ENCODE measurements at regions of chr17 and their contacts with region 1.

Region 1: DNA sequence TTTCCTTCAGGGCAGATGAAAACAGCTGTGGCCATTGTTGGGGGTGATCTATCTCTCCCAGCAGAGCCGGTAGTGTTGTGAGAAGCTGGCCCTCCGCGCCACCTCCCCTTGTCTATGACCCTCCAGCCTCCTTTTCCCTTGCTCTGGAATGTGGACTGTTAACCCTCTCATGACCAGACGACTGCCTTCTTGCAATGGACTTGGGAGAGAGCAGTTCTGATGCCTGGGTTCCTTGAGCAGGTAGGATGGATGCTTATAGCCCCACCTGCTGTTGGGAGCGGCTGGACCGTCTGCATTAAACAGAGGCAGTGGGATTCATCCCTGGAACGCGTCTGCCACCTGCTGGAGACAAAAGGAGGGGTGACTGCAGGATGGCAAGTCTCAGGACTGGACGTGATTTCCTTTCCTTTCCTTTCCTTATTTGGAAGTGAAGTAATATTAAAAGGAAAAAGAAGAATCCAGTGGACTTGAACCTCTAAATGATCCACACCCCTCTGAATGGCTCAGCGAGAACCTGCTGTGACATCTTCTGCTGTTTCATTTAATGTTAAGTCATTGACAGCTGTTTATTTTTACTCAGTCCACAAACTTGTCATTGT is 1.8 kb upstream of the SOST start:
- H3K4me3 Mint-ChIP-seq: no peak overlapping the region
- H3K27ac Mint-ChIP-seq: no peak overlapping the region
- H3K4me1 Mint-ChIP-seq: peaks cover 6% of the 10 kb centered on the region
- H3K27me3 Mint-ChIP-seq: peaks cover 45% of the 10 kb centered on the region

Region 2: GRCh38 chr17:43576563-43577229 is 183.7 kb before region 1 on chr17:
- intact Hi-C with region 1: loop called (anchors 5 kb)
- H3K4me3 Mint-ChIP-seq: no peak overlapping the region
- H3K27ac Mint-ChIP-seq: no peak overlapping the region
- H3K4me1 Mint-ChIP-seq: peaks cover 9% of the 10 kb centered on the region
- H3K27me3 Mint-ChIP-seq: peaks cover 36% of the 10 kb centered on the region

Region 3: GRCh38 chr17:43661699-43662412 is 98.5 kb before region 1 on chr17 and contains the start of gene MEOX1:
- intact Hi-C with region 1: no loop called
- H3K4me3 Mint-ChIP-seq: no peak within 1 kb of the TSS
- H3K27ac Mint-ChIP-seq: no peak within 1 kb of the TSS
- H3K4me1 Mint-ChIP-seq: peaks cover 9% of the 10 kb centered on the region
- H3K27me3 Mint-ChIP-seq: peaks cover 20% of the 10 kb centered on the region

Region 4: DNA sequence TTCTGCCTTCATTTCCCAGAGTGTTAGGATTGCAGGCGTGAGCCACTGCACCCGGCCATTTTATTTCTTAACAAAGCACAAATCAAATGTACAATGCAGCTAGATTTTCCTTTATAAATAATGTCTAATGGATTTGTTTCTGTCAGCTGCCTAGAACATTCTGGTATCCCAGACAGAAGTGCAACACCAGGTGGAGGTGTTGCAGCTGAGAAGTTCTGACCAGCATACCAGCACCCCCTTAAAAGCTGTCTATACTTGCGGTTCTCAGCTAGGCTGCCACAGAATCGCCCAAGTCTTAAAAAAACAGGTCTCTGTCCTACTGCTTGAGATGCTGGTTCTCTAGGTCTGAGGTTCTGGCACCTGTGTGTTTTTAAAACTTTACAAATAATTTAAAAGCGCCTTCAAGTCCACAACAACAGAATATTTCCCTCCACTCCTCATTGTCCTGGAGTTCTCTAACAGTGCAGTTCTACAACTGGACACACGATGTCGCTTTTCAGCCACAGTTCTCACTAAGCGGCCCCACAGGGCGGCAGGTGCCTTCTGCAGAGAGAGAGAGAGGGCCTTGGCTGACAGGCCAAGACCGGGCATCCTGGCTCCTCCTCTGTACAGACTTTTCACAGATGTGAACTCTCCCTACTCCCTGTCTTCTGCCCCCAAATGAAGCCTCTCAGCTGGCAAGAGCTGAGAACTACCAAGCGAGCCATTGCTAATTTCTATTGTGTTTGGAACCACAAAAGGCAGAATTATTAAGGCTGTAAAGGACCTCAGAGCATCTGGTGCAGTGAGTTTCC is 66.1 kb before region 1 on chr17:
- intact Hi-C with region 1: loop called (anchors 1 kb)
- H3K4me3 Mint-ChIP-seq: no peak overlapping the region
- H3K27ac Mint-ChIP-seq: no peak overlapping the region
- H3K4me1 Mint-ChIP-seq: peaks cover 7% of the 10 kb centered on the region
- H3K27me3 Mint-ChIP-seq: peaks cover 31% of the 10 kb centered on the region

Region 5: DNA sequence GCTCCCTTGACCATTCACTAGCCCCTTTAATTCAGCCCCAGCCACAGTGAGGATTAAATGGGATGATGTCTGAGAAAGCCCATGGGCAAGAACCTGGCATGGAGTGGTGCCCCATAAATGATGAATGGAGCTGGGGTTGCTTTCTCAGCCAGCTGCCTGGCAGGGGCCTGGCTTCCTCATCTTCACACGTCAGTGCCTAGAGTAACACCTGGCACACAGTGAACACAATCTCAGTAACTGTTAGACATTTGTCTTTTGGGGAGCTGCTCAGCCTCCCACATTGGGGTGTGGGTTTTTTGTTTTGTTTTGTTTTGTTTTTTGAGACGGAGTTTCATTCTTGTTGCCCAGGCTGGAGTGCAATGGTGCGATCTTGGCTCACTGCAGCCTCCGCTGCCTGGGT is 51.1 kb before region 1 on chr17:
- intact Hi-C with region 1: no loop called
- H3K4me3 Mint-ChIP-seq: no peak overlapping the region
- H3K27ac Mint-ChIP-seq: no peak overlapping the region
- H3K4me1 Mint-ChIP-seq: peaks cover 19% of the 10 kb centered on the region
- H3K27me3 Mint-ChIP-seq: peaks cover 50% of the 10 kb centered on the region

Region 6: DNA sequence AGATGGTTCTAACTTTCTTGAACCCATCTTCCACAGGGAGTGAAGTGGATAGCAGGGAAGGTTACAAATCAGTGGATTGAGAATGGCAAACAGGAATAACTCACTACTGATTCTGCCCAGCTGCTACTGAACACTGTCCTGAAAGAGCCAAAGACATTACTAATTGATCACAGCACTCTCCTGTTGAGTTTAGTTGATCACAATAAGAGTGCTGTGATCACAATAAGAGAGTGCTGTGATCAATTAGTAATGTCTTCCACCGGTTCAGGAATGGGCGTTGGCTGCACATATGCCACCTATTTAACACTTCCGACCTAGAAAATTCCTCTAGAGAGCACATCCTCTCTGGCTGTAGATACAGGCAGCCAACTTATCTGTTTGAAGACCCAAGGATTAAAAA is 31.2 kb after region 1 on chr17:
- intact Hi-C with region 1: no loop called
- H3K4me3 Mint-ChIP-seq: no peak overlapping the region
- H3K27ac Mint-ChIP-seq: no peak overlapping the region
- H3K4me1 Mint-ChIP-seq: peaks cover 24% of the 10 kb centered on the region
- H3K27me3 Mint-ChIP-seq: peaks cover 20% of the 10 kb centered on the region

Region 7: DNA sequence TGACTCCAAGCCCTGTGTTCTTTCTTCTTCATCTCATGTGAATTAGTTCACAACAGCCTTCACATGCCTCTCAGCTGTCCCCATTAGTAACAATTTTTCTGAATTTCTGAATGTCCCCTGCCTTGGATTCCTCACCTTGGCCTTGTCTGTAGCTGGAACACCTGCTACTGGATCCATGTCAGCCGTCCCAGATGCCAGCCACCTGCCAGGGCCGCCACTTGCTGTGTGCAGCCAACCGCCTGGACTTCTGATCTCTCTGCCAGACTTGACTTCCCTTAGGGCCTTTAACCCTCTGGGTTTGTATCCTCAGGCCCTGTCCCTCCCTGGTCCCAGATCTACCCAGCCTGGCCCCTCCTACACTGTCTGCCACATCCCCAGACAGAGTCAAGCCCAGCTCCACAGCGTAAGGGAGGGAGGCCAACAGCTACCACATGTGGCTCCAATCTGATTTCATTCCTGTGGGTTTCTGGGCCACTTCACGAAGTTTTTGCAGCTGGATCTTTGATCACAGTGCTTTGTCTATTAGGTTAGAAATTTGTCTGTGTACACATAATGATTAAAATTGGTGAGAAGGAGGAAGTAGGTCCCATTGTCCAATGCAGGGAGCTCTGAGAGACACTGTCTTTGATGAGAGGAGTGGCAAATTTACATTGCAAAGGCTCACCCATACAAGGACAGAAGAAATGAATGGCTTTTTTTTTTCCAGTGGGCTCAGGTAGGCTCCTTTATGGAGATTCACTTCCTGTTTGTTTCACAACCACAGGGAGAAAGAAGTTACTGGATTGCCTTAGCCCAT is 131.7 kb after region 1 on chr17:
- intact Hi-C with region 1: no loop called
- H3K4me3 Mint-ChIP-seq: no peak overlapping the region
- H3K27ac Mint-ChIP-seq: no peak overlapping the region
- H3K4me1 Mint-ChIP-seq: no peaks in the 10 kb centered on the region
- H3K27me3 Mint-ChIP-seq: peaks cover 17% of the 10 kb centered on the region